ENCODE measurements at regions of chr5 and their contacts with region 1.

Region 1: GRCh38 chr5:135565725-135566421 is 12.9 kb downstream of the CXCL14 start:
- DNase-seq: peak; percentile 88
- ATAC-seq: peak; percentile 64
- H3K4me3 Mint-ChIP-seq: no peak overlapping the region
- H3K27ac Mint-ChIP-seq: no peak overlapping the region
- H3K4me1 Mint-ChIP-seq: peaks cover 37% of the 10 kb centered on the region
- H3K27me3 Mint-ChIP-seq: peaks cover 17% of the 10 kb centered on the region
- CTCF ChIP-seq: peak; percentile 77; the same call in 1 of the 2 replicates

Region 2: DNA sequence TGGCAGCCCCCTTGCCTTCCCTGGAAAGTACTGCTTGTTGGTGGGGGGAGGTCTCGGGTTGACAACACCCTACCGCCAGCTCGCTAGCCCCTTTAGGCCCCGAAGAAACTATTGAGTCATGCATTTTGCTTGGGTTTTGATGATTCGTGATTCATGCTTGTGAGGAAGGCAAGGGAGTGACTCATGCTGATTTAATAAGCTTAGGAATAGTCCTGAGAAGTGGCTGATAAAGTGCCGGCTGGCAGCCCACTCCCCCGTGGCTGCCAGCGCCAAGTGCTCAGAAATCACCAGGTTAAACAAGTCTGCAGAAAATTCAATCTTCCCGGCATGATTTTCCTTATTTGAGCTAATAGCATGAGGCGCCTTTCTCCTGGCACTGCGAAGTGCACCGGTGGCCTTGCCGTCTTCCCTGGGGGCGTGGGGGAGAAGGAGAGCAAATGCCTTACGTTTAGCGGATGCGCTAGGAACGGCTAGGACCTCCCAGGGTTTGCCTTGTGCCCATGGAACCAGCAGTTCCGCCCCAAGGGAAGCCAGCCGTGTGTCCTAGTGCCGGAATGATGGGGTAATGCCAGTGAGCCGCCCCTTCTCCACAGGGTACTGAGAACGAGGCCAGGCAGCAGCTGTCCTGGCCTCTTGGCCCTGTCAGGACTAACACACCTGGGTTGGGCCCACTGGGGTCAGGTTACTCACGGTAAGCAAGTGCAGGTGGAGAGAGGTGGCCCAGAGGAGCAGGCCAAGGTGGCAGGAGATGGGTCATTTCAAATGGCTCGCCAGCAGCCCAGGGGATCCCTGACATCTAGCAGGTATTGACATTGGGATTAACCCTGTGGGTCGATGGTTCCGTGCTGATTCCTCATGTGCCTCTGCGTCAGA is 318.7 kb before region 1 on chr5:
- CTCF ChIA-PET with region 1: no interaction called
- POLR2A ChIA-PET with region 1: no interaction called
- DNase-seq: no peak
- ATAC-seq: peak; percentile 62; the same call in 1 of the 2 replicates
- H3K4me3 Mint-ChIP-seq: no peak overlapping the region
- H3K27ac Mint-ChIP-seq: no peak overlapping the region
- H3K4me1 Mint-ChIP-seq: 0 out of 2 replicates have a peak, but pooled peaks cover 5% of the 10 kb centered on the region
- H3K27me3 Mint-ChIP-seq: no peaks in the 10 kb centered on the region
- CTCF ChIP-seq: no peak

Region 3: DNA sequence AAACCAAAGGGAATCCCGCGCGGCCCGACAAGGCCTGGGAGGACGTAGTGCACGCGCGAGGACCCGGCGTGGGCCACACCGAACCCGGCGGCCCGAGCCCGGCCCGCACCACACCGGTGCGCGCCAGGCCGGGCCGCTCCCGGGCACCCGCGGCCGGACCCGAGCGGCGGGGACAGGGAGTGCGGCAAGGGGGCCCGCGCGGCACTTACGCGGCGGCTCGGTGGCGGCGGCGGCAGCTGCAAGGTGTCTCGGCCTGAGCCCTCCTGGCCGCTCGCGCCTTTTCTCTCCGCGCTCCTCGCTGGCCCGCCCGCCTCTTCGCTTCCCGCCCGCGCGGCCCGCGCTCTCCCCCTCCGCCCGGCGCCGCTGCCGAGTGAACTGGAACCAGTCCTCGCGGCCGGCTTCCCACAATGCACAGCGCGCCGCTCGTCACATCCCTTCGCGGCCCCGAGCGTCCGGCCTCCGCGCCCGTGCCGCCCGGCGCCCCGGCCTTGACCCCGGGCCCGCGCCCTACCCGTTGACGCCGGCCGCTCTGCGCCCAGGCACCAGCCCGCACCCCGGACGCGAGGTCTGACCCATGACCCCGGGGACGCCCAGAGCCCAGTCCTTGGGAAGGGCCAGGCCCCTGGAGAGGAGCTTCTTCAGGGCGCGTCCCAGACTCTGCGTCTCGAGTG is 166.9 kb before region 1 on chr5 and contains the start of gene MACROH2A1:
- CTCF ChIA-PET with region 1: no interaction called
- POLR2A ChIA-PET with region 1: no interaction called
- DNase-seq: peak; percentile 78
- ATAC-seq: peak; percentile 49
- H3K4me3 Mint-ChIP-seq: peak within 1 kb of the TSS; percentile 82
- H3K27ac Mint-ChIP-seq: peak within 1 kb of the TSS; percentile 86
- H3K4me1 Mint-ChIP-seq: peaks cover 50% of the 10 kb centered on the region
- H3K27me3 Mint-ChIP-seq: peaks cover 74% of the 10 kb centered on the region
- CTCF ChIP-seq: no peak
- total RNA-seq, gene MACROH2A1: 83.8 to 93.7 TPM (median 85.9 TPM) in 3 replicates

Region 4: GRCh38 chr5:135438636-135439221 is 127.1 kb before region 1 on chr5:
- CTCF ChIA-PET with region 1: no interaction called
- POLR2A ChIA-PET with region 1: no interaction called
- DNase-seq: no peak
- ATAC-seq: no peak
- H3K4me3 Mint-ChIP-seq: no peak overlapping the region
- H3K27ac Mint-ChIP-seq: no peak overlapping the region
- H3K4me1 Mint-ChIP-seq: peaks cover 7% of the 10 kb centered on the region
- H3K27me3 Mint-ChIP-seq: no peaks in the 10 kb centered on the region
- CTCF ChIP-seq: no peak

Region 5: GRCh38 chr5:135488727-135489465 is 77.0 kb before region 1 on chr5:
- CTCF ChIA-PET with region 1: interaction called, 42 read pairs
- POLR2A ChIA-PET with region 1: no interaction called
- DNase-seq: peak; percentile 86
- ATAC-seq: peak; percentile 56
- H3K4me3 Mint-ChIP-seq: peak overlapping the region; percentile 81
- H3K27ac Mint-ChIP-seq: no peak overlapping the region
- H3K4me1 Mint-ChIP-seq: peaks cover 55% of the 10 kb centered on the region
- H3K27me3 Mint-ChIP-seq: no peaks in the 10 kb centered on the region; the same call in 1 of the 2 replicates
- CTCF ChIP-seq: no peak

Region 6: DNA sequence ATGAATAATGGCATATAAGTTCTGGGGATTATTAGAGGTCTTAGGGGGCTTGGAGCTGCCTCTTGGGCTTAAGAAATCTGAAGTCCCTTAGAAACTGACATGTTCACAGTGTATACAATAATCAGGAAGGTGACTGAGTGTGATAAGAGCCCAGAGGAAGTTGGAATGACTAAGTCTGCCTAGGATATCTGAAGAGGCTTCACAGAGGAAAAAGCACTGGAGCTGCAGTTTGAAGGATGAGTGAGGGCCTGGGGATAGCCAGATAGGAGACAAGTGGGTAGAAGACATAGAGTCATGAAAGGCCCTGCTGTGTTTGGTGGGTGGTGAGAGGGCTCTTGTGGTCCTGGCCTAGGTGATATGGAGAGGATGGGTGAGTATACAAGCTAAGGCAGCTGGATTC is 38.9 kb before region 1 on chr5:
- CTCF ChIA-PET with region 1: no interaction called
- POLR2A ChIA-PET with region 1: no interaction called
- DNase-seq: no peak
- ATAC-seq: no peak
- H3K4me3 Mint-ChIP-seq: no peak overlapping the region
- H3K27ac Mint-ChIP-seq: no peak overlapping the region
- H3K4me1 Mint-ChIP-seq: peaks cover 5% of the 10 kb centered on the region; the same call in 1 of the 2 replicates
- H3K27me3 Mint-ChIP-seq: peaks cover 100% of the 10 kb centered on the region
- CTCF ChIP-seq: no peak

Region 7: GRCh38 chr5:135578685-135579341 is 12.9 kb after region 1 on chr5 and contains the start of gene CXCL14:
- CTCF ChIA-PET with region 1: interaction called, 119 read pairs
- POLR2A ChIA-PET with region 1: no interaction called
- DNase-seq: peak; percentile 74
- ATAC-seq: peak; percentile 71
- H3K4me3 Mint-ChIP-seq: peak within 1 kb of the TSS; percentile 79
- H3K27ac Mint-ChIP-seq: no peak within 1 kb of the TSS
- H3K4me1 Mint-ChIP-seq: peaks cover 21% of the 10 kb centered on the region
- H3K27me3 Mint-ChIP-seq: peaks cover 85% of the 10 kb centered on the region
- CTCF ChIP-seq: no peak
- total RNA-seq, gene CXCL14: 0.64 to 0.87 TPM (median 0.87 TPM) in 3 replicates

Region 8: DNA sequence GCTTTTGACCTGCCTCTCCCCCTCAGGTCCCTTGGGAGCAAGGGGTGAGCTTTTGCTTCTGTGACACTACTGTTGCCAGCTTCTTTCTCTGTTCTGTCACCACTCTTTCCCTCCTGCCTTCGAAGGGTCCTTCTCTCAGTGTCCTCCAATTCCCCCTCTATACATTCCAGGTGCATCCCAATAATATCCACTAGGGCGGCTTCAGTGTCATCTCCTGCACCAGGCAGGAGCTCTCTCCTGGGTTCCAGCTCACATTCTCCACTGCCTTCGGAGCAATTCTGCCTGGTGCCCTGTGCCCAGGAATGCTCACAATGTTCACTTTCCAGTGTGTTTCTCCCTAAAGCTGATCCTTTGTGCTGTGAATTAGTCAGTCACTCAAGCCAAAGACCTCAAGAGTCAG is 96.8 kb after region 1 on chr5:
- CTCF ChIA-PET with region 1: interaction called, 15 read pairs
- POLR2A ChIA-PET with region 1: no interaction called
- DNase-seq: no peak
- ATAC-seq: peak; percentile 87
- H3K4me3 Mint-ChIP-seq: no peak overlapping the region
- H3K27ac Mint-ChIP-seq: no peak overlapping the region
- H3K4me1 Mint-ChIP-seq: peaks cover 9% of the 10 kb centered on the region
- H3K27me3 Mint-ChIP-seq: peaks cover 3% of the 10 kb centered on the region; the same call in 1 of the 2 replicates
- CTCF ChIP-seq: no peak

Region 9: DNA sequence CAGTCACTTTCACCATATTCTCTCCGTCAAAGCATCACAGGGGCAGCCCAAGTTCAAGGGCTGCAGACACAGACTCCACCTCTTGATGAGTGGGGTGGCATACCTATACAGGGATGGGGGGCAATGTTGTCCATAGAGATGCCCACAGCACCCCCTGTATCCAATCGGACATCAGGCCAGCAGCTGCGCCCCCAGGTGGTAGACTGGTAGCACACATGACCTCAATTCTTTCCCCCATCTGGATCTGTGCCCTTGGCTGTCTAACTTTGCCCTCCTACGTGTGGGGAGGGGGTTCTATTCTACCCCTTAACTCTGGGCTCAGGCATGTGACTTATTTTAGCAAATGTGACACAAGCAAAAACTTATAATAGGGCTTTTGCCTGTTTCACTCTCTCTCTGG is 184.6 kb after region 1 on chr5:
- CTCF ChIA-PET with region 1: interaction called, 16 read pairs
- POLR2A ChIA-PET with region 1: no interaction called
- DNase-seq: peak; percentile 36
- ATAC-seq: peak; percentile 82
- H3K4me3 Mint-ChIP-seq: no peak overlapping the region
- H3K27ac Mint-ChIP-seq: no peak overlapping the region
- H3K4me1 Mint-ChIP-seq: peaks cover 4% of the 10 kb centered on the region
- H3K27me3 Mint-ChIP-seq: peaks cover 2% of the 10 kb centered on the region
- CTCF ChIP-seq: no peak

Region 10: GRCh38 chr5:135834639-135835529 is 269.0 kb after region 1 on chr5 and contains the start of gene SLC25A48:
- CTCF ChIA-PET with region 1: interaction called, 81 read pairs
- POLR2A ChIA-PET with region 1: interaction called, 4 read pairs
- DNase-seq: peak; percentile 87
- ATAC-seq: peak; percentile 93
- H3K4me3 Mint-ChIP-seq: peak within 1 kb of the TSS; percentile 84
- H3K27ac Mint-ChIP-seq: no peak within 1 kb of the TSS
- H3K4me1 Mint-ChIP-seq: 0 out of 2 replicates have a peak, but pooled peaks cover 2% of the 10 kb centered on the region
- H3K27me3 Mint-ChIP-seq: peaks cover 89% of the 10 kb centered on the region
- CTCF ChIP-seq: 0 out of 2 replicates have a peak, but pooled peaks have one; percentile 9
- total RNA-seq, gene SLC25A48: 0.76 to 1.1 TPM (median 1.1 TPM) in 3 replicates

Region 11: GRCh38 chr5:135887351-135887864 is 321.5 kb after region 1 on chr5:
- CTCF ChIA-PET with region 1: interaction called, 17 read pairs
- POLR2A ChIA-PET with region 1: no interaction called
- DNase-seq: peak; percentile 76
- ATAC-seq: peak; percentile 71
- H3K4me3 Mint-ChIP-seq: peak overlapping the region; percentile 58
- H3K27ac Mint-ChIP-seq: no peak overlapping the region
- H3K4me1 Mint-ChIP-seq: peaks cover 20% of the 10 kb centered on the region
- H3K27me3 Mint-ChIP-seq: peaks cover 26% of the 10 kb centered on the region
- CTCF ChIP-seq: peak; percentile 78